Panc1 (cell line): ENCODE measurements at regions of chr19 and their contacts with region 1.

Region 1: GRCh38 chr19:29942404-29943261 is 594 bp downstream of the URI1 start:
- DNase-seq: no peak
- ATAC-seq: peak; percentile 90
- H3K4me3 ChIP-seq: peak overlapping the region; percentile 90 to 94
- H3K27ac ChIP-seq: peak overlapping the region; percentile 91
- H3K4me1 ChIP-seq: peaks cover 23% of the 10 kb centered on the region
- H3K27me3 ChIP-seq: no peaks in the 10 kb centered on the region
- CTCF ChIP-seq: no peak

Region 2: GRCh38 chr19:29923653-29924052 is 19.0 kb before region 1 on chr19:
- CTCF ChIA-PET with region 1: no interaction called
- POLR2A ChIA-PET with region 1: no interaction called
- in situ Hi-C with region 1: no loop called
- intact Hi-C with region 1: no loop called
- DNase-seq: no peak
- ATAC-seq: no peak
- H3K4me3 ChIP-seq: no peak overlapping the region
- H3K27ac ChIP-seq: no peak overlapping the region
- H3K4me1 ChIP-seq: no peaks in the 10 kb centered on the region
- H3K27me3 ChIP-seq: no peaks in the 10 kb centered on the region
- CTCF ChIP-seq: no peak

Region 3: DNA sequence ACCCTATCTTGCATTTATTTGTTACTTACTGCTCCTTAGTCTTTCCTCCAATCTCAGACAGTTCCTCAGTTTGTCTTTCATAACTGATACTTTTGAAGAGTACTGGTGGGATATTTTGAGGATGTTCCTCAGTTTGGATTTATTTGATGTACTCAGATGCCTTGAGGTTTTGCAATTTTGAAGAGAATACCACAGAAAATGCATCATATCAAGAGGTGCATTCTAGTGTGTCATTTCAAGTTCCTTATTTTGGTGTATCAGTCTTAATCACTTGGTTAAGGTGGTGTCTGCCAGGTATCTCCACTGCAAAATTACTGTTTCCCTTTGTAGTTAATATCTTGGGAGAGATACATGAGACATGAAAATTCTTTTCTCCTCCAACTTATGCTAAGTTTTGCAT is 74.5 kb after region 1 on chr19:
- CTCF ChIA-PET with region 1: interaction called, 3 read pairs
- POLR2A ChIA-PET with region 1: interaction called, 14 read pairs
- in situ Hi-C with region 1: no loop called
- intact Hi-C with region 1: no loop called
- DNase-seq: no peak
- ATAC-seq: no peak
- H3K4me3 ChIP-seq: no peak overlapping the region
- H3K27ac ChIP-seq: no peak overlapping the region
- H3K4me1 ChIP-seq: no peaks in the 10 kb centered on the region
- H3K27me3 ChIP-seq: no peaks in the 10 kb centered on the region
- CTCF ChIP-seq: no peak